ENCODE measurements at regions of chr9 and their contacts with region 1.

Region 1: DNA sequence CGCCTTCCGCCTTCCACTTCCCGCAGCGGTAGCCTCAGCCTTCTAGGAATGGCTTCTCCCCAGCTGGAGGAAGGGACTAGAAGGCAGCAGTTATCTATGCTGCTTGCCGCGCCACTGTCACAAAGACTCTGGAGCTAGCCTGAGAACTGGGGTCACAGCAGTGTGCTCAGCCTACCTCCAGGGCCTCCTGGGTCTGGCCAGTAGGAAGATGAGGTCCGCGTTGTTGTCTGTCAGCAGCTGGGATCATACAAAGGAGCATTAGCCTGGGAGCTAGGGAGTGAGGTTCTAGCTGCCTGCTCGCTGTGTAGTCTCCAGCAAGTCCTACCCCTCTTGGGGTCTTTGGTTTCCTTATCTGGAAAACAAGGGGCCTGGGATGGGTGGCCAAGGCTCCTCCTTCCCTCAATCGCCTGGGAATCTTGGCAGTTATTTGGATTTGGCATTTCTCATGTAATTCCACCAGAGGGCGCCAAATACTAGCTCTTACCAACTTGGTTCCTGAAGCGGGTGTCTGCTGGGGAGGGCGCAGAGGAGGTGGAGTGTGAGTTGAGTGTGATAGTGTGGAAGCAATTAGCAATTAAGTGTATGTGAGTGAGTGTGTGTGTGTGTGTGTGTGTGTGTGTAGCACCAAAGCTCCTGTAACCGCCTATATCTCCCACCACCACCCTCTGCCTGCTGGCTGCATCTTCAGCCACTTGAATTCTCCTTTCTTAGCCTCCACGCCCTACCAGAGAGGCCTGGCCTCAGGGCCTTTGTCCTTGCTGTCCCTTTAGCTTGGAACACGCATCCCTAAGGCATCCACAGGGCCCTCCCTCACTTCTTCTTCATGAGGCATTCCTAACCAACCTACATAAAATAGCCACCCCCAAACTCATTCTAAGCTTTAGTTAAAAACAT is 97.1 kb downstream of the ENTREP1 start:
- DNase-seq: peak; percentile 54
- H3K4me3 ChIP-seq: no peak overlapping the region
- H3K27ac ChIP-seq: no peak overlapping the region
- H3K4me1 ChIP-seq: no peaks in the 10 kb centered on the region
- CTCF ChIP-seq: peak; percentile 89

Region 2: DNA sequence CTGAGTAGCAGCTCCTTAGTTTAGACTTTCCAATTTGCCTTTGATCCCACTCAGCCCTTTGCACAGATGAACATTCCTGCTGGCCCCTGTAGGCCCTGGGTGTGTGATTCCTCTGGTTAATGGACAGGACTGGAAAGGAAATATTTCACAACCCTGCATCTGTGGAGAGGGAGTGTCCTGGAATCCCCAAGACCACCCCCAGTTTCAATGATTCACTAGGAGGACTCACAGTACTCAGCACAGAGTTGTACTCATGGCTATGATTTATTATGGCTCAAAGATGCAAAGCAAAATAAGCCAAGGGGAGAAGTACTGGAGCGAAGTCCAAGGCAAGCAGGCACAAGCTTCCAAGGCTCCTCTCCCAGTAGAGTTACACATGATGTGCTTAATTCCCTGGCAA is 290.5 kb before region 1 on chr9:
- CTCF ChIA-PET with region 1: no interaction called
- POLR2A ChIA-PET with region 1: no interaction called
- intact Hi-C with region 1: no loop called
- DNase-seq: no peak
- H3K4me3 ChIP-seq: no peak overlapping the region
- H3K27ac ChIP-seq: no peak overlapping the region
- H3K4me1 ChIP-seq: no peaks in the 10 kb centered on the region
- CTCF ChIP-seq: no peak

Region 3: DNA sequence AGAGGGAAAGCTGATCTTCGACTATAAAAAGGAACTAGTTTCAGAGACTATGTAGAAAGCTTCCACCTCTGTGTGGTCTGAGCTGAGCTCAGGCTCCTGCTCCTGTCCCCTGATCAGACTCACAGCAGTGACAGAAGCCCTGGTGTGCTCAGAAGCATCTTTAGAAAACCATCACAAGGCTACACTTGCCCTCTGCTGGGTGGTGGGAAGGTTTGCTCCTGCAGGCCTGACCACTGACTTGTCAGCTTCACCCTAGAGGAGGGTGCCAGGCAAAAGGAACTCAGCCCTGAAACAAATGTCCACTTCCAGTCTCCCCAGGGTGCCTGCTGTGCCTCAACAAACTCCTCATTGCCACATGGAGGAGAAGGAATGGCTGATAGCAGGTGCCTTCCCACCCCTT is 19.7 kb after region 1 on chr9:
- CTCF ChIA-PET with region 1: interaction called, 11 read pairs
- POLR2A ChIA-PET with region 1: no interaction called
- intact Hi-C with region 1: no loop called
- DNase-seq: peak; percentile 1
- H3K4me3 ChIP-seq: no peak overlapping the region
- H3K27ac ChIP-seq: no peak overlapping the region
- H3K4me1 ChIP-seq: no peaks in the 10 kb centered on the region
- CTCF ChIP-seq: no peak

Region 4: GRCh38 chr9:69549310-69550202 is 127.4 kb after region 1 on chr9:
- CTCF ChIA-PET with region 1: no interaction called
- POLR2A ChIA-PET with region 1: interaction called, 6 read pairs
- intact Hi-C with region 1: loop called (anchors 5 kb)
- DNase-seq: peak; percentile 35
- H3K4me3 ChIP-seq: no peak overlapping the region
- H3K27ac ChIP-seq: no peak overlapping the region
- H3K4me1 ChIP-seq: no peaks in the 10 kb centered on the region
- CTCF ChIP-seq: peak; percentile 92

Region 5: GRCh38 chr9:69877854-69878514 is 455.8 kb after region 1 on chr9:
- CTCF ChIA-PET with region 1: no interaction called
- POLR2A ChIA-PET with region 1: no interaction called
- intact Hi-C with region 1: loop called (anchors 5 kb)
- DNase-seq: peak; percentile 23
- H3K4me3 ChIP-seq: no peak overlapping the region
- H3K27ac ChIP-seq: no peak overlapping the region
- H3K4me1 ChIP-seq: no peaks in the 10 kb centered on the region
- CTCF ChIP-seq: peak; percentile 79